Left lung (tissue), 14 donors: ENCODE measurements at regions of chr7 and their contacts with region 1.

Region 1: GRCh38 chr7:33895025-33895804 is 10.1 kb upstream of the BMPER start:
- DNase-seq: peak; percentile 75 to 93 (median 84)
- ATAC-seq: peak; percentile 98
- H3K4me3 ChIP-seq: no peak overlapping the region
- H3K27ac ChIP-seq: no peak overlapping the region
- H3K4me1 ChIP-seq: peaks cover 3% of the 10 kb centered on the region in 2 donors
- H3K27me3 ChIP-seq: no peaks in the 10 kb centered on the region
- CTCF ChIP-seq: peak; percentile 87 to 90

Region 2: GRCh38 chr7:33671531-33672262 is 223.5 kb before region 1 on chr7:
- intact Hi-C with region 1: no loop called
- DNase-seq: no peak
- ATAC-seq: no peak
- H3K4me3 ChIP-seq: no peak overlapping the region
- H3K27ac ChIP-seq: no peak overlapping the region
- H3K4me1 ChIP-seq: no peaks in the 10 kb centered on the region
- H3K27me3 ChIP-seq: no peaks in the 10 kb centered on the region
- CTCF ChIP-seq: no peak

Region 3: DNA sequence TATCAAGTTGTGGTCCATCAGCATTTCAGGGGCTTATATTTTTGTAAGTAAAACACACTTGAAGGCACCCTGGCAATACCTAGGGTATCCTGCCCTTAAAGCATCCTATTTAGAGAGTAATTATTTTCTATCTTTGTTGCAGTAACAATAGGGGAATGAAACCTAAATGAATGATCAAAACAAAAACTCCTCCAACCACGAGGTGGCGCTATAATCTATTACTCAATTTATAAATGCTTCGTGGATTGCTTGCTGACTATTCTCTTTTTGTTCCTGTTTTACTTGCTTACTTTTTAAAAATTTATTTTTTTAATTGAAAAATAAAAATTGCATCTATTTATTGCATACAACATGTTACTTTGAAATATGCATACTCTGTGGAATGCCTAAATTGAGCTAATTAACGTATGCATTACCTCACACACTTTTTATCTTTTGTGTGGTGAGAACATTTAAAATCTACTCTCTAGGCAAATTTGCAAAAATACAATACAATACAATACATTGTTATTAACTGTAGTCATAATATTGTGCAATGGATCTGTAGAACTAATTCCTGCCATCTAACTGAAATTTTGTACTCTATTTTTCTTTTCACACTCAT is 137.6 kb before region 1 on chr7:
- intact Hi-C with region 1: loop called in 1 of 2 experiments (anchors 10 kb)
- DNase-seq: no peak
- ATAC-seq: peak; percentile 44
- H3K4me3 ChIP-seq: no peak overlapping the region
- H3K27ac ChIP-seq: no peak overlapping the region
- H3K4me1 ChIP-seq: no peaks in the 10 kb centered on the region
- H3K27me3 ChIP-seq: no peaks in the 10 kb centered on the region
- CTCF ChIP-seq: peak; percentile 56 to 59